Activated CD4-positive, alpha-beta T cell treated with anti-CD3 and anti-CD28 coated beads, Interleukin-2, amount 10 ng/mL, durations not matched to agents 7 days and 5 days (primary cell): ENCODE measurements at regions of chr11 and their contacts with region 1.

Region 1: GRCh38 chr11:130861902-130862860 is 54.1 kb downstream of the SNX19 start:
- DNase-seq: peak; percentile 92
- H3K4me3 Mint-ChIP-seq: no peak overlapping the region
- H3K27ac Mint-ChIP-seq: no peak overlapping the region
- H3K4me1 Mint-ChIP-seq: no peaks in the 10 kb centered on the region
- H3K27me3 Mint-ChIP-seq: peaks cover 3% of the 10 kb centered on the region

Region 2: DNA sequence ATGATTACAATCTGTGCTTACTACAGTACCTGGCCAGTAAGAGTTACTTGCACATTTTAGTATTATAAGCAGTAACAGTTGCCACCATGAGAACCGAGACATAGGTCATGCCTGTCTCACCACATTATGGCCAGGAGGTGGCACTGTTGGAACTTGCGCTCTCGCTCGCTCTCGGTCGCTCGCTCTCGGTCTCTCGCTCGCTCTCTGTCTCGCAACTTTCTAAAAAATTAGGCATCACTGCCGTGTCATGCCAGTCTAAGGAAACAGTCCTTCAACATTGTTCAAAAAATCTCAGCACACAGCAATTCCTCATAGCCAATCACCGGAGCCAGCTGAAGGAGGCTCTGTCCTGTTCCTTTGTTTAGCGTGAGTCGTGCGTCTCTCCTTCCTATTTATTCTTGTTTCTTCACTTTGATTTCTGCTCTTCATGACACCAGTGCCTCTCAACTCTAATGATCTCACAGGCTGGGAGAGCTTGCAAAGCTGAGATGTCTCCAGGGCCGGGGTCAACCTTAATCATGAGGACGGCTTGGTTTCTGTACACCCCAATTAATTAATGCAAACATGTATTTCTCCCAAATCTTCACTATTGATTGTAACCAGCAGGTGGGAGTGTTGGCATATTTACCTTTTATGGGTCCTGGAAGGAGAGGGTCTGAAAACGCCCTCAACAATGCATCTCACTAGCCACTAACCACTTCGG is 427.5 kb before region 1 on chr11:
- CTCF ChIA-PET with region 1: interaction called, 81 read pairs
- POLR2A ChIA-PET with region 1: no interaction called
- DNase-seq: peak; percentile 75
- H3K4me3 Mint-ChIP-seq: no peak overlapping the region
- H3K27ac Mint-ChIP-seq: no peak overlapping the region
- H3K4me1 Mint-ChIP-seq: peaks cover 27% of the 10 kb centered on the region
- H3K27me3 Mint-ChIP-seq: peaks cover 15% of the 10 kb centered on the region

Region 3: GRCh38 chr11:130442737-130443136 is 419.4 kb before region 1 on chr11:
- CTCF ChIA-PET with region 1: interaction called, 19 read pairs
- POLR2A ChIA-PET with region 1: no interaction called
- DNase-seq: no peak
- H3K4me3 Mint-ChIP-seq: no peak overlapping the region
- H3K27ac Mint-ChIP-seq: no peak overlapping the region
- H3K4me1 Mint-ChIP-seq: peaks cover 24% of the 10 kb centered on the region
- H3K27me3 Mint-ChIP-seq: peaks cover 22% of the 10 kb centered on the region